OCI-LY7 (cell line): ENCODE measurements at regions of chrX and their contacts with region 1.

Region 1: DNA sequence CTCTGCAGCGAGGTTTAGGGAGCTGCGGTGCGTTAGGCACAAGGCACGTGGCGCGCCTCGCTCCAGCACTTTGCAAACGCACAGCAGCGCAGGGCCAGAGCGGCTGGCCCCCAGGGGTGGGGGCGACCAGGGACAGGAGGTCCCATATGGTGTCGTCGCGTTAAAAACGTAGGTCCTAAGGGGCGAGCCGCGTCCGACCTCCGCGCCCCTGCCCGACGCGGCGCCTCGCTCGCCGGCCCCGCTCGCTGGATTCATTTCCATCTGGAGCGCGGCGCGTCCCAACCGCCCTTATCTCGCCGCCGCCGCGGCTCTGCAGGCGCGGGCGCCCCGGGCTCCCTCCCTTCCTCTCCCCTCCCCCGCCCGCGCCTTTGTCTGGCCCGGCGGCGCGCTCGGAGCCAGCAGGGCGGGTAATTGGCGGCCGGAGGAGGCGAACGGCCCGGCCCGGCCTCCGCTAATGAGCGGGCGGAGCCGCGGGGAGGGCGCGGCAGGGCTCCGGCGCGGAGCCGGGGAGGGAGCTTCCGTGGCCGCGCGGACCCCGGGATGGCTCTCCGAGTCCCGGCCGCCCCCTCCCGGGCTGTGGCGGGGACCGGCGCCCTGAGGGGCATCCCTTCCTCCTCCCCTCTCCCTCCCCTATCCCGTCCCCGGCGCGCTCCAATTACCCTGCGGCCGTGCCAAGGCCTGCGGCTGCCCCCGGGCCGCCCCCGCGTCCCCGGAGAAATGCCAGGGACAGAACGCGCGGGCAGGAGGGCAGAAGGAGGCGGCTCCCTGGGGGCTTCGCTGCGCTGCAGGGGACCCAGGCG is 409.0 kb downstream of the BCOR start:
- DNase-seq: no peak
- H3K4me3 ChIP-seq: no peak overlapping the region
- H3K27ac ChIP-seq: no peak overlapping the region
- H3K4me1 ChIP-seq: no peaks in the 10 kb centered on the region
- CTCF ChIP-seq: no peak

Region 2: DNA sequence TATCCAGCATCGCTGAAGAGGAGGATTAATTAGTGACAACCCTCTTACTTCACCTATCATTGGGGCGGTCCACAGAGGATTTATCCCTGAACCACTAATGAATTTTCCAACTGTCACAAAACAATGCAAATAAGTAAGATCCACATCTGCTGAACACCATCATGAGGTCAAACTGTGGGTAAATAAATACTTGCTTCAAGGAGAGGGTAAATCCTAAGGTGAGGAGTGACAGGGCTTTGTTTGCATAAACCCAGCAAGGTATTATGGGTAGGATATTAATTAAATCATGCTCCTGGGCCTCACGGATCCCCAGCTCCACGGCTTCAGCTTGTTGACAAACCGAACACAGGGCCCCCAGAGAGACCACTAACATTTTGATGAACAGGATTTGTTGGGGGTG is 304.6 kb before region 1 on chrX:
- CTCF ChIA-PET with region 1: no interaction called
- POLR2A ChIA-PET with region 1: no interaction called
- intact Hi-C with region 1: no loop called
- DNase-seq: no peak
- H3K4me3 ChIP-seq: no peak overlapping the region
- H3K27ac ChIP-seq: no peak overlapping the region
- H3K4me1 ChIP-seq: no peaks in the 10 kb centered on the region
- CTCF ChIP-seq: no peak

Region 3: DNA sequence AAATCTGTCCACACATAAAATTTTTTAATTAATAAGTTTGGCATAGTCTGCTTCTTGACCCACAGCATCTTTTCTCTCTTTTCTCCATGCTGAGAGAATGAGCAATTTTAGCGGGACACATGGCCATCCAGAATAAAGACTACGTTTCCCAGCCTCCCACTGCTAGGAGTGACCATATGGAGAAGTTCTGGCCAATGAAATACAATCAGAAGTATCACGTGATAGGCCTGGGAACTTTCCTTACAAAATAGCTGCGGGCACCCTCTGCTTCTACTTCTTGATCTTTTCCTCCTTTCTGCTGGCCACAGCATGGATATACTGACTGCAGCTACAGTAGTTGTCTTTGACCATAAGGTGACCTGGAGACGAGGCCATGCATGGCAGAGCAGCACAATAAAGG is 60.9 kb after region 1 on chrX:
- CTCF ChIA-PET with region 1: no interaction called
- POLR2A ChIA-PET with region 1: no interaction called
- intact Hi-C with region 1: no loop called
- DNase-seq: no peak
- H3K4me3 ChIP-seq: no peak overlapping the region
- H3K27ac ChIP-seq: no peak overlapping the region
- H3K4me1 ChIP-seq: peaks cover 13% of the 10 kb centered on the region
- CTCF ChIP-seq: no peak

Region 4: DNA sequence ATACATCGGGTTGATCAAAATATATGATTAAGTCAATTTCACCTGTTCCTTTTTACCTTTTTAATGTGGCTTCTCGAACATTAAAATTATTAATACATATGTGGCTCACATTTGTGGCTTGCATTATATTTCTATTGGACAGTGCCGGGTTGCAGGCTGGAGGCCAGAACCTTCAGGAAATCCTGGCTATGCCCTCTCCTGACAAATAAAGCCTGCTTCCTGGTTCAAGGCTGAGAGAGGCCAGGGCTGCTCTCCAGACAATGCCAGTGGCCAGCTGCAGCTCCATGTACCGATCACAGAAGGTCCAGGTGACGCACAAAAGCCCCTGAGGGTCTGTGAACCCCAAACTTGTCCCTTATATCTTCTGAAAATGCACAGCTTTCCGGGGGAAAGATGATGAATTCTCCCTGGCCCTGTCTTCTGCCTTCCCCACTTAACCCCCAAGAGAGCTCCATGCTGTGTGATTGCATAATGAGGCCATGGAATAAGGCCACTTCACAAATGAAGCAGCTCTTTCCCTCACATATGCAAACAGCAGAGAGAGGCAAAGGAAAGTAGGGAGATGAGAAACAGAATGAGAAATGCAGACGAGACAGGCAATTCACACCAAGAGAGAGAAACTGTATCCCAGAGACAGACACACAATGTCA is 167.8 kb after region 1 on chrX:
- CTCF ChIA-PET with region 1: interaction called, 13 read pairs
- POLR2A ChIA-PET with region 1: no interaction called
- intact Hi-C with region 1: no loop called
- DNase-seq: no peak
- H3K4me3 ChIP-seq: no peak overlapping the region
- H3K27ac ChIP-seq: no peak overlapping the region
- H3K4me1 ChIP-seq: peaks cover 59% of the 10 kb centered on the region
- CTCF ChIP-seq: no peak

Region 5: DNA sequence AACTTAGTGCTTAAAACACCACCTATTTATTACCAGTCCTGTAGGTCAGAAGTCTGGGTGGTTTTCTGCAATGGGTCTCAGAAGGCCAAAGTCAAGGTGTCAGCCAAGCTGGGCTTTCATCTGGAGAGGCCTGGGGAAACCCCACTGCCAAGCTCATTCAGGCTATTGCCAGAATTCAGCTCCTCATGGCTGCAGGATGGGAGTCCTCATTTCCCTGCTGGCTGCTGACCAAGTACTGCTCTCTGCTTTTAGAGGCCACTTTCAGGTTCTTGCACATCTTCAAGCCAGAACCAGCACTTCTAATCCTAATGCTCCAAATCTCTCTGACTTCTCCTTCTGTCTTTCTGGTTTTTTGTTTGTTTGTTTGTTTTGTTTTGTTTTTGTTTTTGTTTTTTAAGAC is 299.7 kb after region 1 on chrX:
- CTCF ChIA-PET with region 1: interaction called, 11 read pairs
- POLR2A ChIA-PET with region 1: no interaction called
- intact Hi-C with region 1: no loop called
- DNase-seq: no peak
- H3K4me3 ChIP-seq: no peak overlapping the region
- H3K27ac ChIP-seq: no peak overlapping the region
- H3K4me1 ChIP-seq: no peaks in the 10 kb centered on the region
- CTCF ChIP-seq: no peak